ENCODE measurements at regions of chr2 and their contacts with region 1.

Region 1: GRCh38 chr2:22934747-22935146 is 450.2 kb upstream of the KLHL29 start:
- DNase-seq: no peak
- H3K4me3 ChIP-seq: no peak overlapping the region
- H3K27ac ChIP-seq: no peak overlapping the region
- H3K4me1 ChIP-seq: no peaks in the 10 kb centered on the region
- H3K27me3 ChIP-seq: no peaks in the 10 kb centered on the region
- CTCF ChIP-seq: no peak

Region 2: GRCh38 chr2:22215517-22215916 is 719.2 kb before region 1 on chr2:
- CTCF ChIA-PET with region 1: no interaction called
- POLR2A ChIA-PET with region 1: interaction called, 34 read pairs
- intact Hi-C with region 1: no loop called
- DNase-seq: no peak
- H3K4me3 ChIP-seq: no peak overlapping the region
- H3K27ac ChIP-seq: no peak overlapping the region
- H3K4me1 ChIP-seq: no peaks in the 10 kb centered on the region
- H3K27me3 ChIP-seq: peaks cover 11% of the 10 kb centered on the region; the same call in 1 of the 2 replicates
- CTCF ChIP-seq: no peak

Region 3: GRCh38 chr2:22952671-22953225 is 18.0 kb after region 1 on chr2:
- CTCF ChIA-PET with region 1: no interaction called
- POLR2A ChIA-PET with region 1: interaction called, 10 read pairs
- intact Hi-C with region 1: no loop called
- DNase-seq: no peak
- H3K4me3 ChIP-seq: no peak overlapping the region
- H3K27ac ChIP-seq: no peak overlapping the region
- H3K4me1 ChIP-seq: no peaks in the 10 kb centered on the region
- H3K27me3 ChIP-seq: peaks cover 36% of the 10 kb centered on the region
- CTCF ChIP-seq: no peak